AG04450 (cell line): ENCODE measurements at regions of chr10 and their contacts with region 1.

Region 1: GRCh38 chr10:70404036-70404786 is at the start of gene EIF4EBP2:
- DNase-seq: peak; percentile 84
- H3K4me3 ChIP-seq: peak within 1 kb of the TSS; percentile 91
- H3K27ac ChIP-seq: peak within 1 kb of the TSS; percentile 82
- H3K27me3 ChIP-seq: no peaks in the 10 kb centered on the region
- CTCF ChIP-seq: no peak
- polyA plus RNA-seq, gene EIF4EBP2: 27.3 and 31.2 TPM in 2 replicates

Region 2: GRCh38 chr10:70418229-70418628 is 14.0 kb after region 1 on chr10:
- CTCF ChIA-PET with region 1: interaction called, 4 read pairs
- POLR2A ChIA-PET with region 1: interaction called, 31 read pairs
- DNase-seq: peak; percentile 70
- H3K4me3 ChIP-seq: no peak overlapping the region
- H3K27ac ChIP-seq: peak overlapping the region; percentile 73
- H3K27me3 ChIP-seq: no peaks in the 10 kb centered on the region
- CTCF ChIP-seq: no peak